ENCODE measurements at regions of chr1 and their contacts with region 1.

Region 1: GRCh38 chr1:45686317-45687013 is at the start of gene GPBP1L1:
- DNase-seq: peak; percentile 84 to 98
- H3K4me3 ChIP-seq: peak within 1 kb of the TSS; percentile 71 to 89
- H3K27ac ChIP-seq: peak within 1 kb of the TSS; percentile 97
- H3K4me1 ChIP-seq: peaks cover 0 to 22% of the 10 kb centered on the region in 2 donors
- H3K27me3 ChIP-seq: no peaks in the 10 kb centered on the region
- CTCF ChIP-seq: no peak
- total RNA-seq, gene GPBP1L1: 161 TPM

Region 2: DNA sequence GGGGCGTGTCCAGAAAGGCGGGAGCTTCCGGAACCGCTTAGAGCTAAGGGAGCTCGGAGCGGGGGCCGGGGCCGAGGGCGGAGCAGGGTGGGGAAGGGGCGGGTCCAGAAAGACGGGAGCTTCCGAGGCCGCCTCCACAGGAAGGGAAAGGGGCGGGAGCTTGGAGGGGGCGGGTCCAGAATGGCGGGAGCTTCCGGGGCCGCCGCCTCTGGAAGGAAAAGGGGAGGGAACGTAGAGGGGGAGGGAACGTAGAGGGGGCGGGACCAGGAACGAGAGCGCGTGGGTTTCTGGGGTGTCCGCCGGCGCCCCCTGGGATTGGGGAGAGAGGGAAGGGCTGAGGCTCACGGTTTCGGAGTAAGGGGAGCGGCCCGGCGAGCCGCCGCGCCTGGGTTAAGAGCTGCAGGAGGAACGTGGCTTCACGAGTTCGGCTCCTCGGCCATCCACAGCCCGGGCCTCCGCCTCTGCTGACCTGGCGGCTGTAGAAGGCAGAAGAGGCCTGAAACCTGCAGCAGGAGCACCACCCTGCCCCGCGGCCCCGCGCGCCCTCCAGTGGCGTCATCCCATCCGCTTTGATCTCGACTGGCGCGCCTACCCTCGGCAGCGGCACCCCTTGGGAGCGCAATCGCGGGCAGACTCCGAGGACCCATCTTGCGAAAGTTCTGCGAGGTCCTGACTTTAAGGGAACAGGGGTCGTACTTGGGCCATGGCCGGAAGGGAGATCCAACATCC is 382.7 kb before region 1 on chr1:
- intact Hi-C with region 1: loop called (anchors 5 kb)
- DNase-seq: peak; percentile 89 to 99
- H3K4me3 ChIP-seq: peak overlapping the region; percentile 69 to 80
- H3K27ac ChIP-seq: peak overlapping the region; percentile 82 to 88
- H3K4me1 ChIP-seq: peaks cover 0 to 3% of the 10 kb centered on the region in 2 donors
- H3K27me3 ChIP-seq: no peaks in the 10 kb centered on the region
- CTCF ChIP-seq: peak; percentile 52 to 77 (median 65)

Region 3: GRCh38 chr1:45521398-45522323 is 164.8 kb before region 1 on chr1 and contains the start of gene PRDX1:
- intact Hi-C with region 1: loop called (anchors 2 kb)
- DNase-seq: peak; percentile 87 to 98
- H3K4me3 ChIP-seq: peak within 1 kb of the TSS; percentile 60 to 93
- H3K27ac ChIP-seq: peak within 1 kb of the TSS; percentile 90 to 96
- H3K4me1 ChIP-seq: peaks cover 0 to 13% of the 10 kb centered on the region in 2 donors
- H3K27me3 ChIP-seq: no peaks in the 10 kb centered on the region
- CTCF ChIP-seq: peak in 1 of 3 experiments; percentile 7
- total RNA-seq, gene PRDX1: 245 TPM

Region 4: DNA sequence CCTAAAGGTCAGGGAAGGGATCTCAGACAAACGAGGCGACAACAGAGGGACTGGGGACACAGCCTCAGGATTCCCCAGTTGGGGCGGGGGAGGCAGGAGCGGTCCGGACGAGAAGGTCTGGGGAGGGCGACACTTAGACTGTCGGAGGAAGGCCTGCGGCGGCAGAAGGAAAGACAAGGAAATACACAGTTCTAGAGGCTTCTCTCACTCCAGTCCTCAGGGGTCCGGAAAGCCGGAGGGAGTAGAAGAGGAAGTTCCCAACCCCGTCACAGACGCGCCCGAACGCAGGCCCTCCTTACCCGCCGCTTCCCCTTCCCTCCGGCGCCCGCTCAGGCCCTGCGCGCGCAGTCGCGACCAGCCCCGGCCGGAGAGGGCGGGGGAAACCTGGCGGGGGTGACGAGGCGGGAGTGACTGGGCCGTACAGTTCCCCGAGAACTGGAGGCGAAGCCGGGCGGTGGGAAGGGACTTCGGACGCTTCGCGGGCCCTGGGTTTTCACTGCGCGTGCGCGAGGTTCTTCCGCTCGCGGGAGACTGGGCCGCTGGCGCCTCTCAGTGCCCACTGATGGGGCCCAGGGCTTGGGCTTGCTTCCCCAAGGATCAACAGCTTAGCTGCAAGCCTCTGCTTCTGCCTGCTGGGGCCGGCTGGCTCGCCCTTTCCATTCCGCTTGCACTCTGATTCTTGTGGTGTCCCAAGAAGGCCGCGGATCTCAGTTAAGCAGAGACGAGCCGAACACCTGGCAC is 64.0 kb after region 1 on chr1 and contains the start of gene IPP:
- intact Hi-C with region 1: loop called (anchors 1 kb)
- DNase-seq: peak; percentile 84 to 98
- H3K4me3 ChIP-seq: peak within 1 kb of the TSS; percentile 68 to 82
- H3K27ac ChIP-seq: peak within 1 kb of the TSS; percentile 90 to 98
- H3K4me1 ChIP-seq: peaks cover 3 to 13% of the 10 kb centered on the region in 2 donors
- H3K27me3 ChIP-seq: no peaks in the 10 kb centered on the region
- CTCF ChIP-seq: peak in 2 of 3 experiments; percentile 8 to 33
- total RNA-seq, gene IPP: 5.5 TPM

Region 5: DNA sequence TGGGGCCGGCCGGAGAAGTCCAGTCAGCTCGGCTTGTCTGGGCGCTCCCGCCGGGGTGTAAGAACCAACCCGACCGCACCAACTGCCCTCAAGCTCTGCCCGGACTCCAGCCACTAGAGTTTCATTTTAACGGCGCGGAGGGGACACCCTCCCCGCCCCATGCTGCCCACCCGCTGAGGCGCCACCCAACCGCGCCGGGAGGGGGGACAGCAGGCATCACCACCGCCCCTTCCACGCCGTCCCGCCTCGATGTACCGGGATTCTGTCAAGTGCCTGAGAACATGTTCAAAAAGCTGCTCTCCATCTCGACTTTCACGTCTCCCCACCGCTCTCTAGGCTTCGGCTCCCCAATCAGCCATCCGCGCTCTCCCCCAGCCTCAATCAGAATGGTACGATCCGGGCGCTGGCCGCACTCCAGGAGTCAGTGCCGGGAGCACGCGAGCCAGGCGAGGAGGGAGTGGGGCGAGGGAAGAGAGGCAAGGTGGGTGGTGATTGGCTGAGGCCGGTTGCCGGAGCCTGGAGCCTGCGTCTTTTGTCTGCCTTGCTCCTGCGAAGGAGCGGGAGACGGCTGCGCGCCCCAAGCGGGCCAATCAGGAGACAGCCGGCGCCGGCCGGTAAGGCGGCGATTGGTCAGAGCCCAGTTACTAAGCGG is 446.2 kb after region 1 on chr1 and contains the start of gene PIK3R3:
- intact Hi-C with region 1: loop called (anchors 2 kb)
- DNase-seq: peak; percentile 90 to 99
- H3K4me3 ChIP-seq: peak within 1 kb of the TSS; percentile 71 to 83
- H3K27ac ChIP-seq: peak within 1 kb of the TSS; percentile 90 to 97
- H3K4me1 ChIP-seq: peaks cover 5 to 16% of the 10 kb centered on the region in 2 donors
- H3K27me3 ChIP-seq: no peaks in the 10 kb centered on the region
- CTCF ChIP-seq: peak in 2 of 3 experiments; percentile 10 to 18
- total RNA-seq, gene PIK3R3: 33.1 TPM

Region 6: GRCh38 chr1:46303038-46303871 is 616.8 kb after region 1 on chr1 and contains the starts of genes LRRC41 and UQCRH:
- intact Hi-C with region 1: loop called (anchors 5 kb)
- DNase-seq: peak; percentile 85 to 98
- H3K4me3 ChIP-seq: peak within 1 kb of the TSS; percentile 81 to 84
- H3K27ac ChIP-seq: peak within 1 kb of the TSS; percentile 98 to 99
- H3K4me1 ChIP-seq: peaks cover 15 to 36% of the 10 kb centered on the region in 2 donors
- H3K27me3 ChIP-seq: no peaks in the 10 kb centered on the region
- CTCF ChIP-seq: no peak
- total RNA-seq, gene LRRC41: 102 TPM
- total RNA-seq, gene UQCRH: 120 TPM

Measured in ascending aorta (tissue), 2 donors.